Right cardiac atrium (tissue), 5 donors: ENCODE measurements at regions of chrX and their contacts with region 1.

Region 1: GRCh38 chrX:54794028-54794427 is 4.0 kb downstream of the ITIH6 start:
- DNase-seq: peak; percentile 29 to 70 (median 62)
- ATAC-seq: peak; percentile 64 to 66
- H3K4me3 ChIP-seq: no peak overlapping the region
- H3K27ac ChIP-seq: no peak overlapping the region
- H3K4me1 ChIP-seq: peaks cover 1% of the 10 kb centered on the region
- H3K27me3 ChIP-seq: no peaks in the 10 kb centered on the region

Region 2: GRCh38 chrX:54675762-54676161 is 118.3 kb before region 1 on chrX:
- intact Hi-C with region 1: no loop called
- DNase-seq: no peak
- ATAC-seq: no peak
- H3K4me3 ChIP-seq: no peak overlapping the region
- H3K27ac ChIP-seq: no peak overlapping the region
- H3K4me1 ChIP-seq: no peaks in the 10 kb centered on the region
- H3K27me3 ChIP-seq: no peaks in the 10 kb centered on the region

Region 3: GRCh38 chrX:54921427-54922021 is 127.5 kb after region 1 on chrX:
- intact Hi-C with region 1: loop called in 1 of 4 experiments (anchors 10 kb)
- DNase-seq: peak; percentile 79 to 88 (median 85)
- ATAC-seq: peak; percentile 75 to 87
- H3K4me3 ChIP-seq: peak overlapping the region; percentile 47
- H3K27ac ChIP-seq: no peak overlapping the region
- H3K4me1 ChIP-seq: peaks cover 3% of the 10 kb centered on the region
- H3K27me3 ChIP-seq: no peaks in the 10 kb centered on the region

Region 4: GRCh38 chrX:55201930-55202579 is 408.0 kb after region 1 on chrX:
- intact Hi-C with region 1: no loop called
- DNase-seq: no peak
- ATAC-seq: no peak
- H3K4me3 ChIP-seq: no peak overlapping the region
- H3K27ac ChIP-seq: no peak overlapping the region
- H3K4me1 ChIP-seq: no peaks in the 10 kb centered on the region
- H3K27me3 ChIP-seq: no peaks in the 10 kb centered on the region